Lower leg skin (tissue), 4 donors: ENCODE measurements at regions of chr2 and their contacts with region 1.

Region 1: DNA sequence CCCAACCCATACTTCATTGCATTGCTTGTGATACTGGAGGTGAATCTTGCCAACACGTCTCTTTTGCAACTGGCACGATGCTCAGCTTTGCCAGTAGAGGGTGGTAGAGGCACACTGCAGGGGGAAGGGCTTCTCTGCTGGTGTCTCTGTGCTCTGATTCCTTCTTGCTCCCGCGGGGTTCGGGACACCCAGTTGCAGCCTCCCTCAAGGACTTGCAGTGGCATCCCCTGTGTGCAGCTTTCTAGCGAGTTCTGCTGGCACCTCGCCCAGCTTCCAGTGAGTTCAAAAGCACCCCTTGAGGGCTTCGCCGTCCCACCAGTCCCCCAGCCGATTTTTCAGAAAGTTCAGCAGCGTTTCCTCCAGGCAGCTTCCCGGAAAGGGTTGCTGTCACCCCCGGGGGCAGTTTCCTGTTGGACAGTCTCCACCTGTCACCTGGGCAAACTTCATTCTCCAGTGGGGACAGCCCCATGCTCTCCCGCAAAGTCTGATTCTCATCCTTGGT is 35.3 kb upstream of the EN1 start:
- DNase-seq: peak; percentile 53 to 90
- H3K4me3 ChIP-seq: no peak overlapping the region
- CTCF ChIP-seq: peak in 1 of 3 donors; percentile 76
- POLR2A ChIP-seq: no peak

Region 2: DNA sequence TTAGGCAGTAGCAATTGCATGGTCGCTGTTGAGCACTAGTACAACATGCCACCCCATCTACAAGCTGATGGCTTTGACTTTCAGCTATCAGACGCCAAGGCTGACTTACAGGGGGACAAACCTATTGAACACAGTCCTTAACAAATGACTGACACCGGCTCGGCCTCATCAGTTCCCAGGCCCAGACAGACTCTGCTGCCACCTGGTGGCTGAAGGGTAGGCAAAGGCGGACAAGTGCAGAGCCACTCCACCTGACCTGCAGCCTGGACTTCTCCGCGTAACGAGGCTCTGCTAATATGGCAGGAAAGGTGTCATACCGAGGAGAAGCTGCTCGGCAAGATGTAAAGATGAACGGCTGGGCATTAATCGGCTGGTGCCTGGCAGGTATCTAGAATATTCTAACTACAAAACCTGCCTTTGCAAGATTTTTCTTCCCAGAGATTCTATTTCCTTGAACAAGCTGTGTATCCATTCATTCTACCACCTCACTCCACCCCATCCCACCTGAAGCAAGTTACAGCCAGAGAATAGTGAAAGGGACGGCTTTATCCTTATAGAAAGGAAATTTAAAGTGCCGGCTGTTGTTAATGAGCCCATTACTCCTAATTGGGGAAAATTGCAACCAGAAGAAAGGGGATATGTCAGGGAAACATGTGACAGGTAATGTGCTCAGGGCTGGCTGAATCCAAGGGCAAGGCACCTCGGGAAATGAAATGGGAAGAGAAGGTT is 408.3 kb after region 1 on chr2:
- intact Hi-C with region 1: loop called (anchors 10 kb)
- DNase-seq: peak in 1 of 2 donors; percentile 95
- H3K4me3 ChIP-seq: no peak overlapping the region
- CTCF ChIP-seq: no peak
- POLR2A ChIP-seq: no peak